ENCODE measurements at regions of chr7 and their contacts with region 1.

Region 1: DNA sequence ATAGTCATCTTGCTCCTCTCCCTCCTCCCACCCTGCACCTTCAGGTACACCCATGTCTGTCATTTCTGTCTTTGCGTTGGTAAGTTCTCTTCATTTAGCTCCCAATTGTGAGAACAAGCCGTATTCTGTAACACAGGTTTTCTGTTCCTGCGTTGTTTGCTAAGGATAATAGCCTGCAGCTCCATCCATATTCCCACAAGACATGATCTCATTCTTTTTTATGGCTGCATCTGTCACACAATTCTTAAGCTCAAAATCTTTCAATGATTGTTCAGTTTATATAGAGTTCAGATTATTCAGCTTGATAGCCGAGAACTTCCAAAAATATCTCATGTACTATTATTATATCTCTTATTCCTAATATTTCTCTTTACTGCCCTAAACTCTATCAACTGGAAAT is 16.0 kb upstream of the TMEM168 start:
- DNase-seq: no peak

Region 2: GRCh38 chr7:112819536-112819935 is 13.4 kb after region 1 on chr7:
- intact Hi-C with region 1: loop called in 1 of 2 experiments (anchors 1 kb)
- DNase-seq: no peak

Region 3: GRCh38 chr7:112873831-112874553 is 67.8 kb after region 1 on chr7:
- intact Hi-C with region 1: no loop called
- DNase-seq: no peak